CD8-positive, alpha-beta T cell (primary cell): ENCODE measurements at regions of chr1 and their contacts with region 1.

Region 1: DNA sequence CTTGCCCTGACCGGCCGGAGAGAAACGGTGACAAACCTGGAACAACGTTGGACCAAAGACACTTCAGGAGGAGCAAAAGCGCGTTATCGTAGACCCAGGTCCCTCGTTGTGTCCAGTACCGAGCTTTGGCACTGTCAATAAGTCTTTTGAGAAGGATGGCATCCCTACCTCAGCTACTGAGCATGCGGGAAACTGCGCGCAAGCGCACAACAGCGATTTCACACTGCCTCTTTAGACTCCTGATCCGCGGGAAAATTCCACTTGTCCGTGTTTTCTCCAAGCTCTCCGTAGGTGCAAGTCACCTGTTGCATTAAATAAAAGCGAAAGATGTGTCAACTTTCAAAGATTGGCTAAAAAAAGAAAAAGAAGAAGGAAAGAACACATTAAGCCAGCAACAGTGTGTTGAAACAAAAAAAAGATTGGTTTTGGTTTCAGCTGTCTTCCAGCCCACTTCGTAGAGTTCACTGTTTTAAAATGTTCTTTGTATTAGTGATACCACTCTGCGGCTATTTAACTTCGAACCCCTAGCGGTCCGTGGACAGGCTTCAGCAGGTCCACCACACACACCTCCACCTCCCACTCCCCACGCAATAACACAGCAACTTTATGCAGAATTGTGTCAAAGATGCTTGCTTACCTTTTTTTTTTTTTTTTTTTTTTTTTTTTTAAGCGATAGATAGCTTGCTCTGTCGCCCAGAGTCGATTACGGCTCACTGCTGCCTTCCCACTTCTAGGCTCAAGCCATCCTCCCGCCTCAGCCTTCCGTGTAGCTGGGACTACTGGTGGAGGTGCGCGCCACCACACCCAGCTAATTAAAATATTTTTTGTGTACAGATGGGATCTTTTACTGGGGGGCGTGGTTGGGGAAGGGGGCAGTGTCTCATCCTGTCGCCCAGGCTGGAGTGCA is at the start of gene BPNT1:
- DNase-seq: peak; percentile 96 to 99 (median 98)
- ATAC-seq: peak; percentile 79
- H3K4me3 ChIP-seq: peak within 1 kb of the TSS; percentile 76 to 88
- H3K4me3 Mint-ChIP-seq: peak within 1 kb of the TSS; percentile 93
- H3K27ac ChIP-seq: peak within 1 kb of the TSS; percentile 58 to 69
- H3K27ac Mint-ChIP-seq: peak within 1 kb of the TSS; percentile 92
- H3K4me1 ChIP-seq: peaks cover 19% of the 10 kb centered on the region
- H3K4me1 Mint-ChIP-seq: peaks cover 42% of the 10 kb centered on the region
- H3K27me3 ChIP-seq: no peaks in the 10 kb centered on the region
- H3K27me3 Mint-ChIP-seq: no peaks in the 10 kb centered on the region
- CTCF ChIP-seq: no peak
- total RNA-seq, gene BPNT1: 2.9 to 3.2 TPM

Region 2: DNA sequence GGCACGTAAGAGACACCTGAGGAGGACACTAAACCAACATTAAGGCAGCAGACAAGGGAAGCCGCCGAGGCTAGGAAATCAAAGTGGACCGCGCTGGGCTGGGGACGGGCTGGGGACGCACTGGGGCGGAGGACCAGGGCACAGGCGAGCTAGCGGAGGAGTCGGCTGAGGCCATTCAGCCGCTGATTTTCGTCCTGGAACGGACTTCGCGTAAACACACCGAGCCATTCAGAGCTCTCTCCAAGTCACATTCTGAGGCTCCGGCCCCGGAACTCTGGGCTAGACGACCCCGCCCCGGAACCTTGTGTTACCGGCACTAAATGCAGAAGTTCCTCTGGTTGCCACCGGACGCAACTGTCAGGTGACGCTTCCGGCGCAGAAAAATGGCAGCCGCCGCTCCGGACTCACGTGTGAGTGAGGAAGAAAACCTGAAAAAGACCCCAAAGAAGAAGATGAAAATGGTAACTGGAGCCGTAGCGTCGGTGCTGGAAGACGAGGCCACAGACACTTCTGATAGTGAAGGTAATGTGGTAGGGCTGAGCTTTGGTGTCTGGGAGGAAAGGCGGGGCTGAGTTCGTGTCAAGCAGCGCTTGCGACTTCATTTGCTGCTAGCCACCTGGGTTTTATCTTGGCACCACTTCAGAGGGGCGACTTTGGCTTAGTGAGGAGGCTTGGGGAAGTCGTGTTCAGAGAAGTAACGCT is 1804.8 kb before region 1 on chr1 and contains the start of gene RRP15:
- CTCF ChIA-PET with region 1: no interaction called
- POLR2A ChIA-PET with region 1: no interaction called
- intact Hi-C with region 1: loop called (anchors 1 to 2 kb)
- DNase-seq: peak; percentile 70 to 92 (median 86)
- ATAC-seq: peak; percentile 95
- H3K4me3 ChIP-seq: peak within 1 kb of the TSS; percentile 71 to 89
- H3K4me3 Mint-ChIP-seq: peak within 1 kb of the TSS; percentile 99
- H3K27ac ChIP-seq: peak within 1 kb of the TSS; percentile 68 to 80
- H3K27ac Mint-ChIP-seq: peak within 1 kb of the TSS; percentile 97
- H3K4me1 ChIP-seq: peaks cover 23% of the 10 kb centered on the region
- H3K4me1 Mint-ChIP-seq: peaks cover 43% of the 10 kb centered on the region
- H3K27me3 ChIP-seq: no peaks in the 10 kb centered on the region
- H3K27me3 Mint-ChIP-seq: peaks cover 20% of the 10 kb centered on the region
- CTCF ChIP-seq: no peak
- total RNA-seq, gene RRP15: 16.1 to 16.7 TPM

Region 3: DNA sequence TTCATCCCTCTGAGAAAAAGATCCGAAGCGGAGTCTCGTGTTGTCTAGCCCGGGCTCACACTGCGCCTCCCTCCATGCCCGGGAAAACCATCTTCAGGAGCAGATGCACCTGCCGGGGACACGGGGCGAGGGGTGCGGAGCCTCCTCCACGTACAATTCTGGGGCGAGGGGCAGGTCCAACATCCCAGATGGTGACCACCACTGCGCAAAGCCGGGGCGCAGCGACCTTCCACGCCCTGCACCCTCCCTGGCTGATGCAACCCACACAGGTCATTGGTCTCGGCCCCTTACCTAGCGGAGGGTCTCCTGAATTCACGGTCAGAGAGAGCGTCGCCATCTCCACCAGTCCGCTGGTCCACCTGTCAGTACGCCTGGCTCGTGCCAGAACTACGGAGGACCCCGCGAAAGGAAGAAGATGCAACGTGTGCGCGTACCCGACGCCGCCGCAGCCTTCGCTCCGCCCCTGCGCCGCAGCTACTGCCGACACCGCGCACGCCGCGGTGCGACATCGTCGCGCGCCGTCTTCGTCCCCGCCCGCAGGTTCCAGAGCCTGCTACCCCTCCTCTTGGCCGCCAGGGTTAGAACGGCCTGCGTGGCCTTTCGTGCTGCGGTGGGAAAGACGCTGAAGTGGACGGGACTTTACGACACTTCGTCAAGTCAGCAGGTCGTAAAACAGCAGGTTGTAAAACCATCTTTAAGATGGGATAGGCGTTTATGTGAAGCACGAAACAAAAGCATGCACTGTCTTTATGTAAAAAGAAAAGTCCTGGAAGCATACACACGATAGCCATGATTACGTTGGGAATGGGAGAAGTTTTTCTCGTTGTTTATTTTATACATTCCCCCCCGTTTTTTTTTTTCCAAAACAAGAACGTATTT is 43.6 kb before region 1 on chr1 and contains the start of gene EPRS1:
- CTCF ChIA-PET with region 1: interaction called, 3 read pairs
- POLR2A ChIA-PET with region 1: interaction called, 5 read pairs
- intact Hi-C with region 1: loop called (anchors 1 kb)
- DNase-seq: peak; percentile 88 to 99 (median 93)
- ATAC-seq: peak; percentile 98
- H3K4me3 ChIP-seq: peak within 1 kb of the TSS; percentile 89 to 98
- H3K4me3 Mint-ChIP-seq: peak within 1 kb of the TSS; percentile 95
- H3K27ac ChIP-seq: peak within 1 kb of the TSS; percentile 81 to 84
- H3K27ac Mint-ChIP-seq: peak within 1 kb of the TSS; percentile 94
- H3K4me1 ChIP-seq: peaks cover 27% of the 10 kb centered on the region
- H3K4me1 Mint-ChIP-seq: peaks cover 39% of the 10 kb centered on the region
- H3K27me3 ChIP-seq: no peaks in the 10 kb centered on the region
- H3K27me3 Mint-ChIP-seq: no peaks in the 10 kb centered on the region
- CTCF ChIP-seq: peak; percentile 52
- total RNA-seq, gene EPRS1: 42.8 to 44.2 TPM

Region 4: GRCh38 chr1:220113136-220113695 is 23.3 kb after region 1 on chr1:
- CTCF ChIA-PET with region 1: interaction called, 3 read pairs
- POLR2A ChIA-PET with region 1: interaction called, 3 read pairs
- intact Hi-C with region 1: loop called in 1 of 2 experiments (anchors 1 kb)
- DNase-seq: peak in 5 of 9 experiments; percentile 17 to 73 (median 23)
- ATAC-seq: peak; percentile 95
- H3K4me3 ChIP-seq: no peak overlapping the region
- H3K4me3 Mint-ChIP-seq: peak overlapping the region; percentile 1
- H3K27ac ChIP-seq: no peak overlapping the region
- H3K27ac Mint-ChIP-seq: no peak overlapping the region
- H3K4me1 ChIP-seq: no peaks in the 10 kb centered on the region
- H3K4me1 Mint-ChIP-seq: peaks cover 6% of the 10 kb centered on the region
- H3K27me3 ChIP-seq: no peaks in the 10 kb centered on the region
- H3K27me3 Mint-ChIP-seq: no peaks in the 10 kb centered on the region
- CTCF ChIP-seq: peak; percentile 76

Region 5: GRCh38 chr1:220272047-220272840 is 182.3 kb after region 1 on chr1 and contains the start of gene RAB3GAP2:
- CTCF ChIA-PET with region 1: no interaction called
- POLR2A ChIA-PET with region 1: no interaction called
- intact Hi-C with region 1: loop called (anchors 1 kb)
- DNase-seq: peak; percentile 95 to 98 (median 97)
- ATAC-seq: peak; percentile 91
- H3K4me3 ChIP-seq: peak within 1 kb of the TSS; percentile 94 to 98
- H3K4me3 Mint-ChIP-seq: no peak within 1 kb of the TSS
- H3K27ac ChIP-seq: peak within 1 kb of the TSS; percentile 94 to 95
- H3K27ac Mint-ChIP-seq: no peak within 1 kb of the TSS
- H3K4me1 ChIP-seq: peaks cover 29% of the 10 kb centered on the region
- H3K4me1 Mint-ChIP-seq: peaks cover 16% of the 10 kb centered on the region
- H3K27me3 ChIP-seq: no peaks in the 10 kb centered on the region
- H3K27me3 Mint-ChIP-seq: peaks cover 2% of the 10 kb centered on the region
- CTCF ChIP-seq: no peak
- total RNA-seq, gene RAB3GAP2: 34.3 to 34.6 TPM

Region 6: GRCh38 chr1:220420726-220421125 is 330.8 kb after region 1 on chr1:
- CTCF ChIA-PET with region 1: no interaction called
- POLR2A ChIA-PET with region 1: no interaction called
- intact Hi-C with region 1: no loop called
- DNase-seq: no peak
- ATAC-seq: no peak
- H3K4me3 ChIP-seq: no peak overlapping the region
- H3K4me3 Mint-ChIP-seq: no peak overlapping the region
- H3K27ac ChIP-seq: no peak overlapping the region
- H3K27ac Mint-ChIP-seq: no peak overlapping the region
- H3K4me1 ChIP-seq: no peaks in the 10 kb centered on the region
- H3K4me1 Mint-ChIP-seq: no peaks in the 10 kb centered on the region
- H3K27me3 ChIP-seq: no peaks in the 10 kb centered on the region
- H3K27me3 Mint-ChIP-seq: peaks cover 12% of the 10 kb centered on the region
- CTCF ChIP-seq: no peak

Region 7: DNA sequence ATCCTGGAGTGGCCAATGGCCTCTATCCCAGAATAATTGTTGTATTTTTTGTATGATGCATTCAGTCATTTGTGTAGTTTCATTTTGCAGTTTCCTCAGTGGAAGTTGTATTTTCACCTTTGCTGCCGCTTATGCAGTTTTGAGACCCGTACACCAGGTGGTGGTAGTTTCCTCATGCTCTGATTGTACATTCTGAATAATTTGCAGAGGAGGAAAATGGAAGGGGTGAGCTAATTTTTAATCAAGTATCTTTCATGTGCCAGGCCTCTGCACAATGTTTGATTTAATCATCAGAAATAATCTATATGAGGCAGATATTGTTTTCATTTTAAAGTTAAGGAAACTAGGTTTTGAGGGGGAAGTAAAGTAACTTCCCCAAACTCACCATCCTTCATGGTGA is 818.9 kb after region 1 on chr1:
- CTCF ChIA-PET with region 1: no interaction called
- POLR2A ChIA-PET with region 1: no interaction called
- intact Hi-C with region 1: no loop called
- DNase-seq: no peak
- ATAC-seq: no peak
- H3K4me3 ChIP-seq: no peak overlapping the region
- H3K4me3 Mint-ChIP-seq: no peak overlapping the region
- H3K27ac ChIP-seq: no peak overlapping the region
- H3K27ac Mint-ChIP-seq: no peak overlapping the region
- H3K4me1 ChIP-seq: no peaks in the 10 kb centered on the region
- H3K4me1 Mint-ChIP-seq: no peaks in the 10 kb centered on the region
- H3K27me3 ChIP-seq: no peaks in the 10 kb centered on the region
- H3K27me3 Mint-ChIP-seq: peaks cover 16% of the 10 kb centered on the region
- CTCF ChIP-seq: no peak